Activated CD4-positive, alpha-beta memory T cell treated with anti-CD3 and anti-CD28 coated beads for 36 hours (primary cell): ENCODE measurements at regions of chr3 and their contacts with region 1.

Region 1: GRCh38 chr3:108818404-108818803 is 4.2 kb upstream of the TRAT1 start:
- DNase-seq: peak; percentile 77
- H3K4me3 Mint-ChIP-seq: peak overlapping the region; percentile 35
- H3K27ac Mint-ChIP-seq: peak overlapping the region; percentile 59
- H3K4me1 Mint-ChIP-seq: peaks cover 29% of the 10 kb centered on the region
- H3K27me3 Mint-ChIP-seq: no peaks in the 10 kb centered on the region

Region 2: DNA sequence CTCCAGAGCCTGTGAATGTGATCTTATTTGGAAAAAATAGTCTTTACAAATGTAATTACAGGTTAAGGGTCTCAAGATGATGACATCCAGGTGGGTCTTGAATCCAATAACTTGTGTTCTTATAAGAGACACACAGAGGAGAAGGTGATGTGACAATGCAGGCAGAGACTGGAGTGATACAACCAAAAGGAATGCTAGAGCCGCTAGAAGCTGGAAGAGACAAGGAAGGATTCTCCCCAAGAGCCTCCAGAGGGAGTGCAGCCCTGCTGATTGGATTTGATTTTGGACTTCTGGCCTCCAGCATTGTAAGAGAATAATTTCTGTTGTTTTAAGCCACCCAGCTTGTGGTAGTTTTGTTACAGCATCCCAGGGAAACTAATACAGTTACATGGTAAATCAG is 317.7 kb before region 1 on chr3:
- CTCF ChIA-PET with region 1: no interaction called
- POLR2A ChIA-PET with region 1: no interaction called
- intact Hi-C with region 1: no loop called
- DNase-seq: no peak
- H3K4me3 Mint-ChIP-seq: no peak overlapping the region
- H3K27ac Mint-ChIP-seq: no peak overlapping the region
- H3K4me1 Mint-ChIP-seq: no peaks in the 10 kb centered on the region
- H3K27me3 Mint-ChIP-seq: no peaks in the 10 kb centered on the region

Region 3: GRCh38 chr3:108662130-108662738 is 156.2 kb before region 1 on chr3:
- CTCF ChIA-PET with region 1: interaction called, 45 read pairs
- POLR2A ChIA-PET with region 1: no interaction called
- intact Hi-C with region 1: loop called (anchors 1 kb)
- DNase-seq: peak; percentile 40
- H3K4me3 Mint-ChIP-seq: no peak overlapping the region
- H3K27ac Mint-ChIP-seq: no peak overlapping the region
- H3K4me1 Mint-ChIP-seq: peaks cover 11% of the 10 kb centered on the region
- H3K27me3 Mint-ChIP-seq: no peaks in the 10 kb centered on the region

Region 4: GRCh38 chr3:108806316-108806715 is 12.1 kb before region 1 on chr3:
- CTCF ChIA-PET with region 1: interaction called, 7 read pairs
- POLR2A ChIA-PET with region 1: no interaction called
- intact Hi-C with region 1: loop called (anchors 1 kb)
- DNase-seq: peak; percentile 25
- H3K4me3 Mint-ChIP-seq: peak overlapping the region; percentile 20
- H3K27ac Mint-ChIP-seq: peak overlapping the region; percentile 83
- H3K4me1 Mint-ChIP-seq: peaks cover 14% of the 10 kb centered on the region
- H3K27me3 Mint-ChIP-seq: no peaks in the 10 kb centered on the region

Region 5: DNA sequence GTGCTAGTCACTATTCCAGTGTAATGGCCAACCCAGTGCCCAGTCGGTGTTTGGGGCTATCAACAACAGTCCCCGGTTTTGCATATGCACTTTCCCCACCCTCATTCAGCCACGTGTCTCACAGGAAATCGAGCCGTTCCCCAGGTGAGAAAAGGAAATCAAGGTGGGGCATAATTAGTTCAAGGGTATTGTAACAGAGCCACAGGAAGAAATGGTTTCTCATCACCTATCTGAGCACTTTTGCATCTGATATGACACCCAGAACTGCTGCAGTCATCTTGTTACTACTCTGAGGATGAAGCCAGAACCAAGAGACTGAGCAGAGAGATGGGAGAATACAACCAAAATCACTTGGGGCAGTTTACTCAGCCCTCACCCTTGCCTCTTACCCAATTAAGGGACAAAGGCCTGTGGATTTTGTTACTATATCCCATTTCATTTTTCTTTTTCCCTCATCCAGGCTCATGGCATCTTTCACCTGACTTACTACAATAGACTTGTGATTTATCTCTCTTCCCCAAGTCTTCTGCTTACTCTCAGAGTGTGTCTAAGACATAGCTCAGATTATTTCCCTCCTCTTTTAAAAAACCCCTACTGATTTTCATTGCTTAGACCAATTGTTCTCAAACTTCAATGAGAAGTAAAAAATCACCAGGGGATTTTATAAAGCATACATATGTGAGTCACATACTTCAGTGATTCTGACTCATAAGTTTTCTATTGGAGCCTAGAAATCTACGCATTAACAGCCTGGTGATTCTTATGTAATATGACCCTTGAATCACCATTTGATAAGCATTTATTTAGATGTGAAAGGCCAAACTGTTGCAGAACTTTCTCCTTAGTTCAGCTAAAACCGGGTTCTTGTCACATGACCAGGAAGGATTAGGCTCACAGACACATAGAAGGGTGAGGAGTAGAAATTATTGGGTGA is 44.7 kb after region 1 on chr3:
- CTCF ChIA-PET with region 1: interaction called, 4 read pairs
- POLR2A ChIA-PET with region 1: interaction called, 4 read pairs
- intact Hi-C with region 1: loop called (anchors 1 kb)
- DNase-seq: peak; percentile 61
- H3K4me3 Mint-ChIP-seq: peak overlapping the region; percentile 48
- H3K27ac Mint-ChIP-seq: peak overlapping the region; percentile 99
- H3K4me1 Mint-ChIP-seq: peaks cover 46% of the 10 kb centered on the region
- H3K27me3 Mint-ChIP-seq: no peaks in the 10 kb centered on the region

Region 6: GRCh38 chr3:108985844-108986243 is 167.4 kb after region 1 on chr3:
- CTCF ChIA-PET with region 1: no interaction called
- POLR2A ChIA-PET with region 1: no interaction called
- intact Hi-C with region 1: no loop called
- DNase-seq: no peak
- H3K4me3 Mint-ChIP-seq: no peak overlapping the region
- H3K27ac Mint-ChIP-seq: no peak overlapping the region
- H3K4me1 Mint-ChIP-seq: no peaks in the 10 kb centered on the region
- H3K27me3 Mint-ChIP-seq: peaks cover 9% of the 10 kb centered on the region